Calu3 (cell line): ENCODE measurements at regions of chr19 and their contacts with region 1.

Region 1: GRCh38 chr19:7806234-7806633 is 23.8 kb upstream of the EVI5L start:
- DNase-seq: no peak
- H3K4me3 Mint-ChIP-seq: no peak overlapping the region
- H3K27ac Mint-ChIP-seq: no peak overlapping the region
- H3K4me1 Mint-ChIP-seq: no peaks in the 10 kb centered on the region
- H3K27me3 Mint-ChIP-seq: no peaks in the 10 kb centered on the region
- CTCF ChIP-seq: no peak

Region 2: DNA sequence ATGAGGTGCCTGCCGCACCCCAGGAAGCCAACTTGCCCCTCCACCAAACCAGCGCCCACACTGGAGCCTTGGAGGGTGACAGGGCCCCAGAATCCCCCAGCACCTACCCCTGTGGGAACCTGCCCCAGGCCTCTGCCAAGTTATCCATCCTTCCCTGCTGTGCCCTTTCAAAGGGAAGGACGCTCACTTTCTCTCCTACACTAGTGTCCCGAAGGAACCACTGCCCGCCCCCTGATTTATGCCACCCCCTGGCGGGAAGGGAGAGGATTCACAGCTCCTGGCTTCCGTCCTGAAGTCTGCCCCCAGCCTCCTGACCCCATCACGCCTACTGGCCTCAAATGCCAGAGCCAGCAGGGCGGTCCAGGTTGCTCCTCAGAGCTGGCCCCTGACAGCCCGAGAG is 25.2 kb after region 1 on chr19:
- CTCF ChIA-PET with region 1: interaction called, 11 read pairs
- intact Hi-C with region 1: no loop called
- DNase-seq: peak; percentile 64
- H3K4me3 Mint-ChIP-seq: peak overlapping the region; percentile 61
- H3K27ac Mint-ChIP-seq: no peak overlapping the region
- H3K4me1 Mint-ChIP-seq: peaks cover 28% of the 10 kb centered on the region
- H3K27me3 Mint-ChIP-seq: no peaks in the 10 kb centered on the region
- CTCF ChIP-seq: peak; percentile 39

Region 3: GRCh38 chr19:8085598-8086408 is 279.6 kb after region 1 on chr19:
- CTCF ChIA-PET with region 1: no interaction called
- intact Hi-C with region 1: no loop called
- DNase-seq: peak; percentile 61
- H3K4me3 Mint-ChIP-seq: no peak overlapping the region
- H3K27ac Mint-ChIP-seq: no peak overlapping the region
- H3K4me1 Mint-ChIP-seq: peaks cover 9% of the 10 kb centered on the region
- H3K27me3 Mint-ChIP-seq: no peaks in the 10 kb centered on the region
- CTCF ChIP-seq: no peak